Gastrocnemius medialis (tissue), 4 donors: ENCODE measurements at regions of chr4 and their contacts with region 1.

Region 1: DNA sequence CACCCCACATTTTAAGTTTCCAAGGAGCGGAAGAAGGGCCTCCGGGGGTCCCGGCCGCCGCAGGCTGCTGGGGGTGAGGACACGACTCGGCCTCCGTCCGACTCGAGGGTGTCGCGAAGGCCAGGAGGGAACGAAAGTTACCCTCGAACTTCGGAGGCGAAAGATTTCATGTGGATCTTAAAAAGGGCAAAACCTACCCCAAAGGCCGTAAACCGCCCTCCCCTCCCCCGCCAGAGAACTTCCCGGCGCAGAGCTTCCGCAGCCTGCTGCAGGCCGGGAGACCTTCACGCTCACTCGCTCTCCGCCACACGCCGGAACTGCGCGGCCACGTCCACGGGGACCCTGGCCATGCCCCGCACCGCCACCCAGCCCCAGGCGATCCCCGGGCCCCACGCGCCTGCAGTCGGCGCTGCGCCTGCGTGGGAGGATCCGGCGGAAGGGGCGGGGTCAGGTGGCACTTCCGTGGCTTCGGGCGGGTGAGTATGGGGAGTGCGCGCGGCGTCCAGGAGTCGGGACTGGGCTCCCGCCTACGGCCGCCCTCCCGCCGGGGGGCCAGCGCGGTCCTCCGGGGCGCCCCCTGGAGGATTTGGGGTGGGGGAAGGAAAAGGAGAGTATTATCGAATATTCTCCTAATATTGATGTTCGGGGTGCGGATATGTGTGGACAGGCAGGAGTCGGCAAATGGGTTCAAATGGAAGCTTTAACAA is at the start of gene MMAA:
- DNase-seq: peak; percentile 93 to 94
- ATAC-seq: peak; percentile 92 to 95
- H3K4me3 ChIP-seq: peak within 1 kb of the TSS; percentile 72 to 98 (median 88)
- H3K27ac ChIP-seq: peak within 1 kb of the TSS; percentile 92 to 99 (median 98)
- H3K4me1 ChIP-seq: peaks cover 16 to 24% of the 10 kb centered on the region in 2 donors
- H3K27me3 ChIP-seq: no peaks in the 10 kb centered on the region
- CTCF ChIP-seq: peak; percentile 35 to 76 (median 63)
- POLR2A ChIP-seq: peak; percentile 96 to 97
- total RNA-seq, gene MMAA: 5.1 to 10.9 (median 8.4) TPM

Region 2: GRCh38 chr4:145097821-145098674 is 521.0 kb before region 1 on chr4 and contains the starts of genes ABCE1 and ANAPC10:
- in situ Hi-C with region 1: no loop called
- intact Hi-C with region 1: loop called (anchors 5 kb)
- DNase-seq: peak; percentile 93 to 95
- ATAC-seq: peak; percentile 94 to 96
- H3K4me3 ChIP-seq: peak within 1 kb of the TSS; percentile 83 to 90 (median 86)
- H3K27ac ChIP-seq: peak within 1 kb of the TSS; percentile 91 to 96 (median 94)
- H3K4me1 ChIP-seq: peaks cover 33 to 43% of the 10 kb centered on the region in 2 donors
- H3K27me3 ChIP-seq: no peaks in the 10 kb centered on the region
- CTCF ChIP-seq: peak in 2 of 5 experiments; percentile 5 to 35
- POLR2A ChIP-seq: peak; percentile 55 to 57
- total RNA-seq, gene ABCE1: 42.9 to 79.3 (median 62.5) TPM
- total RNA-seq, gene ANAPC10: 17.7 to 33.6 (median 24.9) TPM

Region 3: GRCh38 chr4:145180298-145181090 is 438.6 kb before region 1 on chr4 and contains the start of gene OTUD4:
- in situ Hi-C with region 1: no loop called
- intact Hi-C with region 1: loop called (anchors 2 kb)
- DNase-seq: peak; percentile 94 to 96
- ATAC-seq: peak; percentile 71 to 76
- H3K4me3 ChIP-seq: peak within 1 kb of the TSS; percentile 63 to 95 (median 87)
- H3K27ac ChIP-seq: peak within 1 kb of the TSS; percentile 97 to 99 (median 98)
- H3K4me1 ChIP-seq: peaks cover 26 to 43% of the 10 kb centered on the region in 2 donors
- H3K27me3 ChIP-seq: no peaks in the 10 kb centered on the region
- CTCF ChIP-seq: peak in 3 of 5 experiments; percentile 15 to 23 (median 18)
- POLR2A ChIP-seq: peak; percentile 86 to 87
- total RNA-seq, gene OTUD4: 32.6 to 61.1 (median 47.9) TPM

Region 4: DNA sequence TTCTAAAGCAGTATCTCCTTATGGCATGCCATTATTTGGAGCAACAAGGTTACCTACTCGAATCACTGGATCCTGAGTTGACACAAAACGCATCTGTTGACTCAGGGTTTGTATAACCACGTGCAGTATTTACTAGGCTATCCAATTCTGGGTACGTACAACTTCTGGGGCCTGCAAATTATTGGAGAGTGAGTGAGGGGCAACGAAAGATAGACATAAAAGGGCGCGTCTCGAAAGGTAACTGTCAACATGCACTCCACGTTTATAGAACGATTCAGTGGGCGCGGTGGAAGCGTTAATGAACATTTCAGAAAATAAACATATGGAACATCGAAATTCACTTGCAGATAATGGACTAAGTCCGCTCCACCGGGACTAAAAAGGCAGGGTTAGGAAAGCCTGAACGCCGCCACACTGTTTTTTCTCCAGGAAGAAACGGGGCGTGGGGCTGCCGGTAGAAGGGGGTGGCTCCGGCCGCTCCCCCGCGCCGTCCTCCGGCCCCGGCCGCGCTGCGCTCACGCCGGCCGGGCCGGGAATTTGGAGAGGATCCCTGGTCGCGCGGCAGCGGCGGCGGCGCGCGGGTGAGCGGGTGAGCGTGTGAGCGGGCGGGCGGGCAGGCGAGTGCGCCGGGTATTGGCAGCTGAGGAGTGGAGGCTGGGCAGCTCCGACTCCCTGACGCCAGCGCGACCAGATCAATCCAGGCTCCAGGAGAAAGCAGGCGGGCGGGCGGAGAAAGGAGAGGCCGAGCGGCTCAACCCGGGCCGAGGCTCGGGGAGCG is 137.7 kb before region 1 on chr4 and contains the start of gene SMAD1:
- in situ Hi-C with region 1: no loop called
- intact Hi-C with region 1: loop called (anchors 1 kb)
- DNase-seq: peak; percentile 84 to 87
- ATAC-seq: peak; percentile 80 to 85
- H3K4me3 ChIP-seq: peak within 1 kb of the TSS; percentile 68 to 94 (median 77)
- H3K27ac ChIP-seq: peak within 1 kb of the TSS; percentile 91 to 98 (median 94)
- H3K4me1 ChIP-seq: peaks cover 28 to 30% of the 10 kb centered on the region in 2 donors
- H3K27me3 ChIP-seq: no peaks in the 10 kb centered on the region
- CTCF ChIP-seq: peak in 1 of 5 experiments; percentile 5
- POLR2A ChIP-seq: peak; percentile 77 to 84
- total RNA-seq, gene SMAD1: 19.9 to 33.9 (median 21.7) TPM

Region 5: GRCh38 chr4:145819853-145820181 is 200.7 kb after region 1 on chr4:
- in situ Hi-C with region 1: no loop called
- intact Hi-C with region 1: loop called (anchors 2 kb)
- DNase-seq: peak; percentile 44 to 50
- ATAC-seq: peak; percentile 90 to 93
- H3K4me3 ChIP-seq: peak overlapping the region in 3 of 4 donors; percentile 12 to 34 (median 34)
- H3K27ac ChIP-seq: peak overlapping the region; percentile 77 to 87 (median 83)
- H3K4me1 ChIP-seq: peaks cover 30 to 32% of the 10 kb centered on the region in 2 donors
- H3K27me3 ChIP-seq: no peaks in the 10 kb centered on the region
- CTCF ChIP-seq: peak in 1 of 5 experiments; percentile 16
- POLR2A ChIP-seq: no peak

Region 6: GRCh38 chr4:146175541-146176453 is 556.7 kb after region 1 on chr4 and contains the start of gene LSM6:
- in situ Hi-C with region 1: no loop called
- intact Hi-C with region 1: loop called (anchors 10 kb)
- DNase-seq: peak; percentile 76 to 82
- ATAC-seq: peak; percentile 94 to 96
- H3K4me3 ChIP-seq: peak within 1 kb of the TSS; percentile 83 to 90 (median 88)
- H3K27ac ChIP-seq: peak within 1 kb of the TSS; percentile 81 to 93 (median 88)
- H3K4me1 ChIP-seq: peaks cover 35 to 44% of the 10 kb centered on the region in 2 donors
- H3K27me3 ChIP-seq: no peaks in the 10 kb centered on the region
- CTCF ChIP-seq: peak in 2 of 5 experiments; percentile 34 to 40
- POLR2A ChIP-seq: peak; percentile 61 to 69
- total RNA-seq, gene LSM6: 12.7 to 31.0 (median 15.5) TPM